Naive thymus-derived CD4-positive, alpha-beta T cell (primary cell): ENCODE measurements at regions of chr12 and their contacts with region 1.

Region 1: GRCh38 chr12:43805860-43806736 is at the start of gene TWF1:
- DNase-seq: peak; percentile 76 to 94 (median 89)
- ATAC-seq: peak; percentile 97
- H3K4me3 ChIP-seq: peak within 1 kb of the TSS; percentile 67
- H3K4me3 Mint-ChIP-seq: peak within 1 kb of the TSS; percentile 94 to 100 (median 100)
- H3K27ac ChIP-seq: peak within 1 kb of the TSS; percentile 94
- H3K27ac Mint-ChIP-seq: peak within 1 kb of the TSS; percentile 98 to 100 (median 100)
- H3K4me1 ChIP-seq: peaks cover 20 to 33% of the 10 kb centered on the region in 2 donors
- H3K4me1 Mint-ChIP-seq: peaks cover 13 to 73% (median 59%) of the 10 kb centered on the region in 7 donors
- H3K27me3 ChIP-seq: no peaks in the 10 kb centered on the region
- H3K27me3 Mint-ChIP-seq: no peaks in the 10 kb centered on the region
- total RNA-seq, gene TWF1: 26.7 to 51.2 (median 35.6) TPM

Region 2: GRCh38 chr12:42325653-42326474 is 1480.2 kb before region 1 on chr12 and contains the starts of genes PPHLN1 and ZCRB1:
- CTCF ChIA-PET with region 1: no interaction called
- POLR2A ChIA-PET with region 1: no interaction called
- intact Hi-C with region 1: loop called (anchors 1 to 2 kb)
- DNase-seq: peak; percentile 61 to 79 (median 74)
- ATAC-seq: peak; percentile 94
- H3K4me3 ChIP-seq: peak within 1 kb of the TSS; percentile 69
- H3K4me3 Mint-ChIP-seq: peak within 1 kb of the TSS; percentile 92 to 100 (median 98)
- H3K27ac ChIP-seq: peak within 1 kb of the TSS; percentile 80
- H3K27ac Mint-ChIP-seq: peak within 1 kb of the TSS; percentile 93 to 99 (median 97)
- H3K4me1 ChIP-seq: peaks cover 15 to 20% of the 10 kb centered on the region in 2 donors
- H3K4me1 Mint-ChIP-seq: peaks cover 33 to 57% (median 50%) of the 10 kb centered on the region in 7 donors
- H3K27me3 ChIP-seq: no peaks in the 10 kb centered on the region
- H3K27me3 Mint-ChIP-seq: no peaks in the 10 kb centered on the region
- total RNA-seq, gene PPHLN1: 89.1 to 97.6 (median 90.2) TPM
- total RNA-seq, gene ZCRB1: 20.3 to 47.5 (median 23.8) TPM

Region 3: DNA sequence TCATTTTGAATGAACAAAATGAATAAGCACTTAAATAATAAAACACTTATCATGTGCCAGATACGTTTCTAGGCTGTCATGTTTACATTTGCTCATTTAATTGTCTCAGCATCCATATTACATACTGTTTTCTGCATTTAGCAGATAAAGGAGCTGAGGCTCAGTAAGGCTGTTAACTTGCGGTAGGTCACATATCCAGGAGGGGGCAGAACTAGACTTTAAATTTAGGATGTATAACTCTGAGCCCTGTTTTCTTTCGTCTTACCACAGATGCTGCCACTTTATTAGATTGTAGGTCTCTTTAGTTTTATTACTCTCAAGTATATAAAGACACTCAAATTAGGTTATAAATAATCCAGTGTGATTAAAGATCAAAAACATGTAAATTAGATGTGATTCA is 29.6 kb before region 1 on chr12:
- CTCF ChIA-PET with region 1: interaction called, 3 read pairs
- POLR2A ChIA-PET with region 1: interaction called, 5 read pairs
- intact Hi-C with region 1: loop called in 1 of 2 experiments (anchors 2 kb)
- DNase-seq: peak in 7 of 9 donors; percentile 19 to 55 (median 38)
- ATAC-seq: peak; percentile 66
- H3K4me3 ChIP-seq: no peak overlapping the region
- H3K4me3 Mint-ChIP-seq: no peak overlapping the region
- H3K27ac ChIP-seq: no peak overlapping the region
- H3K27ac Mint-ChIP-seq: no peak overlapping the region
- H3K4me1 ChIP-seq: no peaks in the 10 kb centered on the region
- H3K4me1 Mint-ChIP-seq: peaks cover 0 to 12% (median 6%) of the 10 kb centered on the region in 7 donors
- H3K27me3 ChIP-seq: no peaks in the 10 kb centered on the region
- H3K27me3 Mint-ChIP-seq: no peaks in the 10 kb centered on the region

Region 4: GRCh38 chr12:43789941-43790340 is 16.2 kb before region 1 on chr12:
- CTCF ChIA-PET with region 1: interaction called, 4 read pairs
- POLR2A ChIA-PET with region 1: interaction called, 15 read pairs
- intact Hi-C with region 1: no loop called
- DNase-seq: no peak
- ATAC-seq: no peak
- H3K4me3 ChIP-seq: no peak overlapping the region
- H3K4me3 Mint-ChIP-seq: no peak overlapping the region
- H3K27ac ChIP-seq: no peak overlapping the region
- H3K27ac Mint-ChIP-seq: peak overlapping the region in 4 of 9 donors; percentile 34 to 62 (median 49)
- H3K4me1 ChIP-seq: no peaks in the 10 kb centered on the region
- H3K4me1 Mint-ChIP-seq: peaks cover 0 to 5% (median 0%) of the 10 kb centered on the region in 7 donors
- H3K27me3 ChIP-seq: no peaks in the 10 kb centered on the region
- H3K27me3 Mint-ChIP-seq: no peaks in the 10 kb centered on the region

Region 5: GRCh38 chr12:43816168-43816567 is 10.1 kb after region 1 on chr12:
- CTCF ChIA-PET with region 1: no interaction called
- POLR2A ChIA-PET with region 1: interaction called, 11 read pairs
- intact Hi-C with region 1: no loop called
- DNase-seq: no peak
- ATAC-seq: no peak
- H3K4me3 ChIP-seq: no peak overlapping the region
- H3K4me3 Mint-ChIP-seq: peak overlapping the region in 1 of 10 donors; percentile 49
- H3K27ac ChIP-seq: no peak overlapping the region
- H3K27ac Mint-ChIP-seq: peak overlapping the region in 1 of 9 donors; percentile 26
- H3K4me1 ChIP-seq: peaks cover 0 to under 1% of the 10 kb centered on the region in 2 donors
- H3K4me1 Mint-ChIP-seq: peaks cover 0 to 34% (median 14%) of the 10 kb centered on the region in 7 donors
- H3K27me3 ChIP-seq: no peaks in the 10 kb centered on the region
- H3K27me3 Mint-ChIP-seq: peaks cover 0 to 25% (median 0%) of the 10 kb centered on the region in 5 donors

Region 6: DNA sequence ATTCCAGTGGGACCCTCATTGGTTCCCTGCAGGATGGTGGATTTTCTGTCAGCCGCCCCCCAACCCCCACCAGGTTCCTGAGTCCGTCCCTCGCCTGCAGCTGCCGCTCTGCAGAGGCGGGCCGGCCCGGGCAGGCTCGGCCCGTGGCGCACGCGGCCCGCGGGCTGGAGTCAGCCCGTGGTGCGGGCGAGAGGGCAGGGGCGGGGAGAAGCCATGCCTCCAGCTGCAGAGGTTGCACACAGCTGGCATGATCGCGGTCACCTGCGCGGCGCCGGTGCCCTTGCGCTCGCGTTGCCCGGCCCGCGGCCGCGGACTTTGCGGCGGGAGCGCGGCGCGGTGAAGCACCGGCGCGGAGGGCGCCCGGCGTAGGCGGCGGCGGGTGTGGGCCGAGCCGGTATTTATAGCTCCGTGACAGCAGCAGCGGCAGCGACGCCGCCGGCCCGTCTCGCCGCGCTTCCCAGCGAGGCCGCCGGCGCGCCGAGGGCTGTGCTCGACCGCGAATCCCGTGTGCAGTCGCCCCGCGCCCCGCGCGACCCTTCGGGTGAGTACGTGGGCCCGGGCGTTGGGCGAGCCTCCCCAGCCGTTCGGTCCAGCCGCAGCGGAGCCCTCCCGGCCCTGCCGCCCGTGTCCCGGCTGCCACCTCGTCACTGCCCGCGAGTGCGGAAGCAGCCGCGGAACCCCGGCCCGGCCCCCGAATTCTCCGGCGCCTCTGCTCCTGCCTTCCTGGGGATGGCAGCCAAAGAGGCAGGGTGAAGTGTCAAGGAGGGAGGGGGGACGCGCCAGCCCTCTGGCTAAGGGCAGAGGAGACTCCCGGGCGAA is 29.8 kb after region 1 on chr12 and contains the start of gene TMEM117:
- CTCF ChIA-PET with region 1: interaction called, 3 read pairs
- POLR2A ChIA-PET with region 1: interaction called, 134 read pairs
- intact Hi-C with region 1: loop called (anchors 1 kb)
- DNase-seq: peak; percentile 40 to 73 (median 67)
- ATAC-seq: peak; percentile 83
- H3K4me3 ChIP-seq: peak within 1 kb of the TSS; percentile 73
- H3K4me3 Mint-ChIP-seq: peak within 1 kb of the TSS; percentile 83 to 95 (median 90)
- H3K27ac ChIP-seq: peak within 1 kb of the TSS; percentile 81
- H3K27ac Mint-ChIP-seq: peak within 1 kb of the TSS; percentile 47 to 94 (median 89)
- H3K4me1 ChIP-seq: peaks cover 21 to 27% of the 10 kb centered on the region in 2 donors
- H3K4me1 Mint-ChIP-seq: peaks cover 25 to 75% (median 56%) of the 10 kb centered on the region in 7 donors
- H3K27me3 ChIP-seq: no peaks in the 10 kb centered on the region
- H3K27me3 Mint-ChIP-seq: peaks cover 0 to 45% (median 0%) of the 10 kb centered on the region in 5 donors
- total RNA-seq, gene TMEM117: 0.31 to 6.6 (median 4.2) TPM

Region 7: DNA sequence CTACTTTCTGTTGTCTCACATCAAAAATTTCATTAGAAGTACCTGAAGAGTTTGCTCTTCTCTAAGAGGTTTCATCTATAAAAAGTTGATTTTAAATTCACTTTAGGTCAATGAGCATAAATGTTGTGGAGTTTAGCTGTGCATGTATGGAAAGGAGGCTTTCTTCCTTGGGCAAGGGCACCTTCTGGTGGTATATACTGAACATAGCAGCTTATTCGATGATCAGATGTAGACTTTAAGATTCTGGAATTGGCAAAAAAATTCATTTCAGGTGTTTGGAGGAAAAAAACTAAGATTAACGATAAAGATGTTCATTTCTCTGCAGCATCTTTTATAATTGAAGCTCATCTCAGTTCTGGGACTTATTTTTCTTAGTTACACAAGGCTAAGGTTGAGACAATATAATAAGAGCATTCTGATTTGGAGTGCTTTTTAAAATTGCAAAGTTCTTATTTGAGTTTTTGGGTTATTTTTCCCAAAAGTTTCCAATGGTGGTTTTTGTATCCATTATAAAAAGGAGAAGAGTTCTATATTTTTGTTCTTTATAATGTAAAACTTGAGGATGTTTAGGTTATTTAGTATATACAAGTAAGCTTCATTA is 76.6 kb after region 1 on chr12:
- CTCF ChIA-PET with region 1: interaction called, 8 read pairs
- POLR2A ChIA-PET with region 1: interaction called, 4 read pairs
- intact Hi-C with region 1: loop called (anchors 1 to 2 kb)
- DNase-seq: peak in 7 of 9 donors; percentile 38 to 65 (median 56)
- ATAC-seq: peak; percentile 85
- H3K4me3 ChIP-seq: no peak overlapping the region
- H3K4me3 Mint-ChIP-seq: no peak overlapping the region
- H3K27ac ChIP-seq: no peak overlapping the region
- H3K27ac Mint-ChIP-seq: no peak overlapping the region
- H3K4me1 ChIP-seq: no peaks in the 10 kb centered on the region
- H3K4me1 Mint-ChIP-seq: peaks cover 0 to 3% (median 0%) of the 10 kb centered on the region in 7 donors
- H3K27me3 ChIP-seq: no peaks in the 10 kb centered on the region
- H3K27me3 Mint-ChIP-seq: no peaks in the 10 kb centered on the region

Region 8: GRCh38 chr12:44812062-44812461 is 1006.0 kb after region 1 on chr12:
- CTCF ChIA-PET with region 1: no interaction called
- POLR2A ChIA-PET with region 1: no interaction called
- intact Hi-C with region 1: no loop called
- DNase-seq: peak in 7 of 9 donors; percentile 42 to 65 (median 60)
- ATAC-seq: peak; percentile 79
- H3K4me3 ChIP-seq: no peak overlapping the region
- H3K4me3 Mint-ChIP-seq: peak overlapping the region in 3 of 10 donors; percentile 14 to 38 (median 34)
- H3K27ac ChIP-seq: no peak overlapping the region
- H3K27ac Mint-ChIP-seq: peak overlapping the region in 6 of 9 donors; percentile 21 to 77 (median 41)
- H3K4me1 ChIP-seq: peaks cover 14 to 15% of the 10 kb centered on the region in 2 donors
- H3K4me1 Mint-ChIP-seq: peaks cover 8 to 50% (median 38%) of the 10 kb centered on the region in 7 donors
- H3K27me3 ChIP-seq: no peaks in the 10 kb centered on the region
- H3K27me3 Mint-ChIP-seq: no peaks in the 10 kb centered on the region